Activated CD4-positive, alpha-beta T cell treated with anti-CD3 and anti-CD28 coated beads for 36 hours (primary cell): ENCODE measurements at regions of chr1 and their contacts with region 1.

Region 1: GRCh38 chr1:236795035-236795756 is at the start of gene MTR:
- DNase-seq: peak; percentile 98
- ATAC-seq: peak; percentile 95
- H3K4me3 Mint-ChIP-seq: peak within 1 kb of the TSS; percentile 97
- H3K27ac Mint-ChIP-seq: peak within 1 kb of the TSS; percentile 100
- H3K4me1 Mint-ChIP-seq: peaks cover 33% of the 10 kb centered on the region
- H3K27me3 Mint-ChIP-seq: peaks cover 2% of the 10 kb centered on the region
- total RNA-seq, gene MTR: 57.3 to 64.8 TPM

Region 2: DNA sequence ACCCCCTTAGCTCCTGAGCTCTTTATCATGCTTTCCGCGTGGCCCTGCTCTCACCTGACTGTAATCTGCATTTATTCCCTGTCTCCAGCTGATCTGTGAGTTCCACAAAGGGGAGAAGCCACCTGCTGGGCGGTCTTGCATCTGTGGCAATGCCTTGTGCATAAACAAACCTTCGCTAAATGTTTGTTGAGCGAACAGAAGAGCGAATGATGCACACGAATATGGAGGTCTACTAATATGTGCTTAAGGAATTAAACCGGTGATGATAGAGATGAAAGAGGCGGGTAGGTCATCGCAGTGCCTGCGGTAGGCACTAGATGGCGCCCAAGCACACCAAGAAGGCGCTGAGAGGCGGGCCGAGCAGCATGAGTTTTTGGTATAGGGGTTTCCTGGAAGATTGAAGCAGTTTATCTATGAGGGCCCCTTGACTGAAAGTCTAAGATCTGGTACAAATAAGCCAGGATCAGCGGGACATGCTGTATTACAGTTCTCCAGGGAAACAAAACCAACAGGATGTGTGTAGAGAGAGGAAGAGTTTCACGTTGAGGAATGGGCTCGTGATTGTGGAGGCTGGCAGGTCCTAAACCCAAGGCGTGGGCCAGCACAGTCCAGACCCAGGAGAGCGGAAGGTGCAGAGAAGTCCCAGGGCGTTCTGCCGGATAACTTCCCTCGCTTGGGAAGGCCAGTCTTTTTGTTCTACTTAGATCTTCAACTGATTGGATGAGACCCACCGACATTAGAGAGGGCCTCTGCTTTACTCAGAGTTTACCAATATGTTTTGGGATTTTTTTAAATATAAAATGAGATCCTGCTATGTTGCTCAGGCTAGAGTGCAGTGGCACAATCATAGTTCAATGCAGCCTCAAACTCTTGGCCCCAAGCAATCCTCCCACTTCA is 1701.3 kb before region 1 on chr1:
- CTCF ChIA-PET with region 1: no interaction called
- POLR2A ChIA-PET with region 1: no interaction called
- intact Hi-C with region 1: no loop called
- DNase-seq: peak; percentile 92
- ATAC-seq: peak; percentile 97
- H3K4me3 Mint-ChIP-seq: no peak overlapping the region
- H3K27ac Mint-ChIP-seq: no peak overlapping the region
- H3K4me1 Mint-ChIP-seq: peaks cover 8% of the 10 kb centered on the region
- H3K27me3 Mint-ChIP-seq: peaks cover 3% of the 10 kb centered on the region

Region 3: GRCh38 chr1:236502885-236503639 is 292.1 kb before region 1 on chr1:
- CTCF ChIA-PET with region 1: no interaction called
- POLR2A ChIA-PET with region 1: interaction called, 11 read pairs
- intact Hi-C with region 1: no loop called
- DNase-seq: peak; percentile 36
- ATAC-seq: no peak
- H3K4me3 Mint-ChIP-seq: peak overlapping the region; percentile 43
- H3K27ac Mint-ChIP-seq: peak overlapping the region; percentile 74
- H3K4me1 Mint-ChIP-seq: peaks cover 14% of the 10 kb centered on the region
- H3K27me3 Mint-ChIP-seq: no peaks in the 10 kb centered on the region

Region 4: DNA sequence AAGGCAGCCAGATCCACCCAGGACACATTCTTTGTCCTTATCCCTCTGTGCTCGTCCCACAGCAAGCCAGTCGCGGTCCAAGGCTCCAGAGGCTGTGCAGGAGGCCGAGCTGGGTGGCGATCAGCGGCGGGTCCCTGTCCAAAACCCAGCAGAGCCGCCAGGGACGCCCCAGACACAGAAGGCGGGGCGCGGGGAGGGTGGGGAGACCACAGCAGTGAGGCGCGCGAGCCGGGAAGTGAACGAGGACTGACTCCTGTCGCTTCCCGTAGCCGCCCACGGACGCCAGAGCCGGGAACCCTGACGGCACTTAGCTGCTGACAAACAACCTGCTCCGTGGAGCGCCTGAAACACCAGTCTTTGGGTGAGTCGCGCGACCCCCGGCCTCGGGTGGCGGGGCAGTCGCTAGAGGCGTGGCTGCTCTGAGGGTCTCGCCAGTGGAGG is 271.5 kb before region 1 on chr1 and contains the start of gene LGALS8:
- CTCF ChIA-PET with region 1: no interaction called
- POLR2A ChIA-PET with region 1: no interaction called
- intact Hi-C with region 1: loop called (anchors 1 to 5 kb)
- DNase-seq: peak; percentile 94
- ATAC-seq: peak; percentile 79
- H3K4me3 Mint-ChIP-seq: peak within 1 kb of the TSS; percentile 99
- H3K27ac Mint-ChIP-seq: peak within 1 kb of the TSS; percentile 98
- H3K4me1 Mint-ChIP-seq: peaks cover 25% of the 10 kb centered on the region
- H3K27me3 Mint-ChIP-seq: no peaks in the 10 kb centered on the region
- total RNA-seq, gene LGALS8: 106 to 155 TPM

Region 5: DNA sequence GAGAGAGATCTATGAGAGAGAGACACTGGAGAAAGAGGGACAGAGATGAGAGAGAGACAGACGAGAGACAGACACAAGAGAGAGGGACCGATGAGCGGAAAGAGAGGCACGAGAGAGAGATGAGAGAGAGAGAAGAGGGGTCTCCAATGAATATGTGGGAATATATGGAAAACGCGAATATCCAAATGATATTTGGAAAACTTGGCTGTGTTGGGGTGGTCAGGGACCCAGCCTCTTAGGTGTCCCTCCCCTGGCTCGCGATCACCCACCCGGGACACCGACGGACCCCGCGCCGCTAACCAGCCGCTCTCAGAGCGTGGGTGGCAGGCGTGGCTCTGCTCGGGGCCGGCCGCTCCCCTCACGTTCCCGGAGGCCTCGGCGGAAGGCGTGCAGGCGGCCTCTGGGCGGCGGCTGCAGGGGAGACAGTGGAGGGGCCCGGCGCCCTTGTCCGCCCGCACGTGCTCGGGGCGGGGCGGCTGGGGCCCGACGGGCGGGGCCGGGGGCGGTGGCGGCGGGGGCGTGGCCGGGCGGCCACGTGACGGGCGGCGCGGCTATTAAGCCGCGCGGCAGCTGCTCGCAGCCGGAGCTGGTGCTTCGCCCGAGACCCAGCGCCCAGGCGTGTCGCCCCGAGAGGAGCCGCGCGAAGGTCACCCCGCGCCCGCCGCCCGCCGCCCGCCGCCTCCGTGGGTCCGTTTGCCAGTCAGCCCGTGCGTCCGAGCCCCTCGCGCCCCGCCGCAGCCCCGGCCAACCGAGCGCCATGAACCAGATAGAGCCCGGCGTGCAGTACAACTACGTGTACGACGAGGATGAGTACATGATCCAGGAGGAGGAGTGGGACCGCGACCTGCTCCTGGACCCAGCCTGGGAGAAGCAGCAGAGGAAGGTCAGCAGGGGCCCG is 109.0 kb before region 1 on chr1 and contains the start of gene ACTN2:
- CTCF ChIA-PET with region 1: interaction called, 4 read pairs
- POLR2A ChIA-PET with region 1: no interaction called
- intact Hi-C with region 1: loop called in 1 of 2 experiments (anchors 1 kb)
- DNase-seq: peak; percentile 68
- ATAC-seq: peak; percentile 82
- H3K4me3 Mint-ChIP-seq: peak within 1 kb of the TSS; percentile 51
- H3K27ac Mint-ChIP-seq: peak within 1 kb of the TSS; percentile 43
- H3K4me1 Mint-ChIP-seq: peaks cover 20% of the 10 kb centered on the region
- H3K27me3 Mint-ChIP-seq: peaks cover 34% of the 10 kb centered on the region
- total RNA-seq, gene ACTN2: 0.44 to 0.46 TPM